CD4-positive, alpha-beta T cell (primary cell): ENCODE measurements at regions of chr1 and their contacts with region 1.

Region 1: DNA sequence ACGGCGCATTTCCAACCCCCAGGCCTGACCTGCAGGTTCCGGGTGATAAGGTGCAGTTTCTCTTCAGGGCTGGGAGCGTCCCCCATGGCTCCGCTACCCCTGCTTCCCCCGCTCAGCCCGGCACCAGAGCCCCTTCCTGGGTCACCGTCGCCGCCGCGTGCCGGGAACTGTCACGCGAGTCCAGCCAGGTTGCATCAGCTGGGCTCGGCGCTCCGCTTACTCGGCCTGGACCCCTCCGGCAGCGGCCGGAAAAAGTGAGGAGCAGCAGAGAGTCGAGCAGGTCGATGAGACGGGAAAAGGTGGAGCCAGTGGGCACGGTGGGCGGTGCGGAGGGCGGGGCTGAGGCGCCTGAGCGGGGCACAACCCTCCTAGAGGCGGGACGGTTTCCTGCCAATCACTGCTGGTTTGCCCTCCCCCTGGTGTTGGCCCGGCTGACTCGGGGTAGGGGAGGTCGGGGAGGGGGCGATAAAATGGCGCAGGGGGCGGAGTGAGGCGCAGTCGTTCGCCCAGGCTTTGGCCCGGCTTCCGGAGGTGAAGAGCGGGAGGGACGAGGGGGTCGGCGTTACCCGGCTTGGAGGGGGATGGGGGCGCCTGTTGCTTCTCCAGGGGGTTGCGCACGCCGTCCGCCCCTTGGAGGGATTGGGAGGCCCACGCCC is at the starts of genes S100PBP and YARS1:
- DNase-seq: peak; percentile 98 to 100 (median 100)
- ATAC-seq: peak; percentile 94
- H3K4me3 ChIP-seq: peak within 1 kb of the TSS; percentile 99
- H3K4me3 Mint-ChIP-seq: peak within 1 kb of the TSS; percentile 100
- H3K27ac ChIP-seq: peak within 1 kb of the TSS; percentile 85 to 87
- H3K27ac Mint-ChIP-seq: peak within 1 kb of the TSS; percentile 96
- H3K4me1 ChIP-seq: peaks cover 60% of the 10 kb centered on the region
- H3K4me1 Mint-ChIP-seq: peaks cover 63% of the 10 kb centered on the region
- H3K27me3 ChIP-seq: no peaks in the 10 kb centered on the region
- H3K27me3 Mint-ChIP-seq: no peaks in the 10 kb centered on the region
- CTCF ChIP-seq: no peak
- total RNA-seq, gene S100PBP: 18.8 to 21.6 TPM
- total RNA-seq, gene YARS1: 67.6 to 73.2 TPM

Region 2: GRCh38 chr1:31644560-31645273 is 1172.6 kb before region 1 on chr1 and contains the start of gene PEF1:
- CTCF ChIA-PET with region 1: no interaction called
- POLR2A ChIA-PET with region 1: no interaction called
- intact Hi-C with region 1: loop called in 1 of 2 experiments (anchors 5 kb)
- DNase-seq: peak; percentile 98 to 100 (median 99)
- ATAC-seq: peak; percentile 89
- H3K4me3 ChIP-seq: peak within 1 kb of the TSS; percentile 85
- H3K4me3 Mint-ChIP-seq: peak within 1 kb of the TSS; percentile 99
- H3K27ac ChIP-seq: peak within 1 kb of the TSS; percentile 99
- H3K27ac Mint-ChIP-seq: peak within 1 kb of the TSS; percentile 100
- H3K4me1 ChIP-seq: peaks cover 52% of the 10 kb centered on the region
- H3K4me1 Mint-ChIP-seq: peaks cover 29% of the 10 kb centered on the region
- H3K27me3 ChIP-seq: no peaks in the 10 kb centered on the region
- H3K27me3 Mint-ChIP-seq: no peaks in the 10 kb centered on the region
- CTCF ChIP-seq: no peak
- total RNA-seq, gene PEF1: 42.3 to 45.9 TPM

Region 3: DNA sequence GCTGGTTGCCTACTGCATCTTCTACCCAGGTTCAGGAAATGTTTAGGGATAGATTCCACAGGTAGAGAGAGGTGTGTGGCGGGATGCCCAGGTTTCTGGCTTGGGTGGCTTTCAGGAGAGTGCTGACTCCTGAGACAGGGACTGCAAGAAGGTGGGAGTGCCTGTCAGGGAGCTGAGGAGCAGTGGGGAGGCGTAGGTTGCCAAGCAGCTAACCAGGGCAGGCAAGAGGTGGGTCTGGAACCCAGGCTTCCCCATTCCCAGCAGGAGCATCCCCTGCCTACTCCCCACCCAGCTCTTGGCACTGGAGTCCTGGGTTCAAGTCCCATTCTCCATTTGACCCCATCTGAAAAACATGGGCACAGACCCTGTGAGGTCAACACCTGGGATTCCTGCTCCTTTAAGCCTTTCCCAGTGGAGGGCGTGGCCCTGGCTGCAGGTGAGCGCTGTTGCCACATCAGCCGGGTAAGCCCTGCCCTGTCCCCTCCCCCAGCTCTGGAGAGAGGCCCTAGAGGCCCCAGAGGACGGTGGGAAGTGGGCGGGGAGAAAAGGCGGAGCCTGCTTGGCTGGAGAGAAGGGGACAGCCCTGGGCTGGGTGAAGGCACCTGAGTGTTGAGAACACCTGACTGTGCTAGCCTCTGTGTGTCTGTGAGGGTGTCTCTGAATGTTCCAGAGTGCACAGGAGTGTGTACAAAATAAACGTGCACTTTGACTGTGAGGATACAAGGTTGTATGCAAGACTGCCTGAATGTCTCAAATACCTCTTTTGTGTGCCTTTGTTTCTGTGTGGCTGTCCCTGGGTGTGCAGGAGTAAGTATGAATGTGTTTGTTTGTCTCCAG is 100.8 kb before region 1 on chr1:
- CTCF ChIA-PET with region 1: interaction called, 16 read pairs
- POLR2A ChIA-PET with region 1: no interaction called
- intact Hi-C with region 1: no loop called
- DNase-seq: peak in 12 of 14 experiments; percentile 9 to 69 (median 34)
- ATAC-seq: peak; percentile 51
- H3K4me3 ChIP-seq: no peak overlapping the region
- H3K4me3 Mint-ChIP-seq: no peak overlapping the region
- H3K27ac ChIP-seq: no peak overlapping the region
- H3K27ac Mint-ChIP-seq: no peak overlapping the region
- H3K4me1 ChIP-seq: peaks cover 17% of the 10 kb centered on the region
- H3K4me1 Mint-ChIP-seq: peaks cover 5% of the 10 kb centered on the region
- H3K27me3 ChIP-seq: peaks cover 0 to 3% of the 10 kb centered on the region in 2 experiments
- H3K27me3 Mint-ChIP-seq: peaks cover 8% of the 10 kb centered on the region
- CTCF ChIP-seq: no peak

Region 4: GRCh38 chr1:32964461-32965250 is 147.4 kb after region 1 on chr1 and contains the start of gene RNF19B:
- CTCF ChIA-PET with region 1: no interaction called
- POLR2A ChIA-PET with region 1: interaction called, 5 read pairs
- intact Hi-C with region 1: loop called in 1 of 2 experiments (anchors 5 kb)
- DNase-seq: peak; percentile 87 to 97 (median 94)
- ATAC-seq: peak; percentile 93
- H3K4me3 ChIP-seq: peak within 1 kb of the TSS; percentile 73
- H3K4me3 Mint-ChIP-seq: peak within 1 kb of the TSS; percentile 93
- H3K27ac ChIP-seq: peak within 1 kb of the TSS; percentile 59 to 61
- H3K27ac Mint-ChIP-seq: peak within 1 kb of the TSS; percentile 89
- H3K4me1 ChIP-seq: peaks cover 21% of the 10 kb centered on the region
- H3K4me1 Mint-ChIP-seq: peaks cover 37% of the 10 kb centered on the region
- H3K27me3 ChIP-seq: no peaks in the 10 kb centered on the region
- H3K27me3 Mint-ChIP-seq: no peaks in the 10 kb centered on the region
- CTCF ChIP-seq: no peak
- total RNA-seq, gene RNF19B: 33.4 to 37.4 TPM

Region 5: GRCh38 chr1:33181921-33182341 is 364.6 kb after region 1 on chr1 and contains the start of gene TRIM62:
- CTCF ChIA-PET with region 1: no interaction called
- POLR2A ChIA-PET with region 1: no interaction called
- intact Hi-C with region 1: loop called in 1 of 2 experiments (anchors 5 kb)
- DNase-seq: peak; percentile 60 to 89 (median 72)
- ATAC-seq: peak; percentile 71
- H3K4me3 ChIP-seq: peak within 1 kb of the TSS; percentile 88
- H3K4me3 Mint-ChIP-seq: peak within 1 kb of the TSS; percentile 93
- H3K27ac ChIP-seq: peak within 1 kb of the TSS in 1 of 2 donors; percentile 30
- H3K27ac Mint-ChIP-seq: peak within 1 kb of the TSS; percentile 62
- H3K4me1 ChIP-seq: peaks cover 23% of the 10 kb centered on the region
- H3K4me1 Mint-ChIP-seq: peaks cover 34% of the 10 kb centered on the region
- H3K27me3 ChIP-seq: peaks cover 0 to 3% of the 10 kb centered on the region in 2 experiments
- H3K27me3 Mint-ChIP-seq: no peaks in the 10 kb centered on the region
- CTCF ChIP-seq: no peak
- total RNA-seq, gene TRIM62: 18.9 to 23.0 TPM